Posterior cingulate gyrus (tissue), 11 donors: ENCODE measurements at regions of chr16 and their contacts with region 1.

Region 1: GRCh38 chr16:83200005-83200779 is 573.4 kb downstream of the CDH13 start:
- DNase-seq: peak in 6 of 10 donors; percentile 16 to 90 (median 52)

Region 2: DNA sequence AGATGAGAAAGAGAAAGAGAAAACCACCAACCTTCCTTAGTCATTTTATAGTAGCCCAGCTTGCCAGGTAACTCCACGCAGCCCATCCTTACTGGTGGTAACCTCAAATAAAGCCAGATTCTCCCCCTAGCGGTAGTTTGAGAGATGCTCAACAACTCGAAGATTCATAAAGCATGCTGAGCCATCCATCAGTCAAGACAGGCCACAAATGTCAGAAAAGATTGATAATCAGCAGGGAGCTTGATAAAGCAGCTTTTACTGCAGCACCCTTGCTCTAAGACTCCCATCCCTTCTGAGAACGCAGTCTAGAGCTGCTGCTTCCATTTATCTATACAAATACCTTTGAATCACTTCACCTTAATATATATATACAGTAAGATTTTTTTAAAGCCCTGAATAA is 156.1 kb after region 1 on chr16:
- intact Hi-C with region 1: loop called (anchors 10 kb)
- DNase-seq: peak in 1 of 10 donors; percentile 40